H1 (cell line): ENCODE measurements at regions of chr16 and their contacts with region 1.

Region 1: DNA sequence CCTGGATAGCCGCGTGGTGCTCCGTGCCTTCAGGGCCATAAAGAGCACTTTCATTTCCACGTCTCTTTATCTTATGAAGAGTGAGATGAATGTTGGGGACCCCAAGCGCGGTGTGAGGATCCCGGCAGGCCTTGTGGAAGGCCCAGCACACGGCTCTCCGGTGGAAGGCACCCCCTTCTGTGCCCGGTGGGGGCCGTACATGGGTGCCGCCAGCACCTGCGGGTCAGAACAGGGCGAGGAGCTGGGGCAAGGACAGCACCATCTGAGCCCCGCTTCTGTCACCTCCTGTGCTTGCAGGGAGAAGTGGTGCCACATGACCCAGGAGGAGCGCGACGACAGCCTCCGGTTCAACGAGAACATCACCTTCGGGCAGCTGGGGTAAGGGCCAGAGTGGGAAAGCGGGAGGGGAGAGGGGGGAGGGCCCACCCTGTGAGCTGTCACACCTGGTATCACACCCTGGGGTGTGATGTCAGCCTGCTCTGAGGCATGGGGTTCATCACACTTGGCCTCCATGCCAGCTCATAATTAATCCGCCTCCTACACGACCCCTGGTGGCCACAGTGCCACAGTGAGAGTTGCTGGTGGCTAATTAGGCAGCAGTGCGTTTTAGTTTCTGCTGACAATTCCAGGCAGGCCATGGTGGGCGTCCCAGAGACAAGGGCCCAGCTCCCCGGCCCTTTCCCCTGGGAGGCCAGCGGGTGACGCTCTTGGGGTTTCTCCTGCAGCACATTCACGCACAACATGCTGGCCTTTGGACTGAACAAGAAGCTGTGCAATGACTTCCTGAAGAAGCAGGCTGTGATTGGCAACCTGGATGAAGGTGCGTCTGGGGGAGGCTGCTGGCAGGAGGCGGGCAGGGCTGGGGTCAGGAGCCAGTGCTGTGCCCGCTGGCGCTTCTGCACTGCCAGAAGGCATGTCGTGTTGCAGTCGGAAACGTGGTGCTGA is 25.7 kb downstream of the CIBAR2 start:
- DNase-seq: peak; percentile 44 to 89
- H3K4me3 ChIP-seq: no peak overlapping the region
- H3K27ac ChIP-seq: no peak overlapping the region
- H3K4me1 ChIP-seq: peaks cover 11 to 21% (median 19%) of the 10 kb centered on the region in 4 experiments
- H3K27me3 ChIP-seq: peaks cover 8 to 39% (median 32%) of the 10 kb centered on the region in 4 experiments
- CTCF ChIP-seq: peak; percentile 89 to 94 (median 93)
- EP300 ChIP-seq: no peak
- POLR2A ChIP-seq: no peak
- RAD21 ChIP-seq: peak; percentile 68 to 83

Region 2: GRCh38 chr16:85004559-85005205 is 81.9 kb before region 1 on chr16:
- CTCF ChIA-PET with region 1: interaction called, 13 read pairs
- POLR2A ChIA-PET with region 1: no interaction called
- DNase-seq: no peak
- H3K4me3 ChIP-seq: no peak overlapping the region
- H3K27ac ChIP-seq: no peak overlapping the region
- H3K4me1 ChIP-seq: peaks cover 0 to 17% (median 5%) of the 10 kb centered on the region in 4 experiments; a peak in 6 of 7 replicates
- H3K27me3 ChIP-seq: no peaks in the 10 kb centered on the region
- CTCF ChIP-seq: no peak
- EP300 ChIP-seq: no peak
- POLR2A ChIP-seq: no peak
- RAD21 ChIP-seq: no peak

Region 3: DNA sequence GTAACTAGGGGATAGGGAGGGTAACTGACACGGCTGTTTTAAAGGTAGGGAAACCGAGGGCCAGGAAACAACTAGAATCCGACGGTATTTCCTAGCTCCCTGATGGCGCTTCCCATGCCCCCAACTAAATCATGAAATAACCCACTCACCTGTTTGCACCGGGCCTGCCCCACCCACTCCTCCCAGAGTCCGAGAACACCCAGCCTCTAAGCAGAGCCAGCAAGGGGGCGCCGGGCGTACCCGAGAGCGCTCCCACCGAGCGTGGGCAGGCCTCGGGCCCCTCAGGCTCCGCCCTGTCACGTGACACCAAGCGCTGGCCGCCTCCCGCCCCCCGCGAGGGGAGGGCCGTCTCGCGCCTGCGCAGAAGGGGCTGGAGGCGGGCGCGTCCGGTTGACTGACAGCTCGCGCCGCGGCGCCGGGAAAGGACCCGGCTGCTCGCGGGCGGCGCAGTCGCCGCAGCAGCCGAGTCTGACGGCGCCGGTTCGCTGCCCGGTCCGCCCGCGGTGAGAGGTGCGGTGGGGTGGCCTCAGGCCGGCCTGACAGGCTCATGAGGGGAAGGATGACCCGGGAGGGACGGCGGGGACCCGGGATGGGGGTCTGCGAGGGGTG is 59.2 kb before region 1 on chr16 and contains the start of gene KIAA0513:
- CTCF ChIA-PET with region 1: interaction called, 26 read pairs
- POLR2A ChIA-PET with region 1: no interaction called
- DNase-seq: peak; percentile 73 to 97
- H3K4me3 ChIP-seq: peak within 1 kb of the TSS; percentile 70 to 92 (median 79)
- H3K27ac ChIP-seq: no peak within 1 kb of the TSS
- H3K4me1 ChIP-seq: peaks cover 3 to 7% (median 3%) of the 10 kb centered on the region in 4 experiments; a peak in 5 of 7 replicates
- H3K27me3 ChIP-seq: peaks cover 0 to 14% (median 7%) of the 10 kb centered on the region in 4 experiments; a peak in 4 of 7 replicates
- CTCF ChIP-seq: peak in 1 of 3 experiments; percentile 3; a peak in 1 of 4 replicates
- EP300 ChIP-seq: no peak
- POLR2A ChIP-seq: no peak; a peak in 1 of 3 replicates
- RAD21 ChIP-seq: no peak
- total RNA-seq, gene KIAA0513: 5.8 and 6.1 TPM in 2 replicates

Region 4: GRCh38 chr16:85072947-85073346 is 13.7 kb before region 1 on chr16:
- CTCF ChIA-PET with region 1: interaction called, 18 read pairs
- POLR2A ChIA-PET with region 1: interaction called, 5 read pairs
- DNase-seq: no peak
- H3K4me3 ChIP-seq: no peak overlapping the region
- H3K27ac ChIP-seq: no peak overlapping the region
- H3K4me1 ChIP-seq: peaks cover 0 to 13% (median 4%) of the 10 kb centered on the region in 4 experiments; a peak in 5 of 7 replicates
- H3K27me3 ChIP-seq: peaks cover 0 to 11% (median 7%) of the 10 kb centered on the region in 4 experiments; a peak in 4 of 7 replicates
- CTCF ChIP-seq: no peak
- EP300 ChIP-seq: no peak
- POLR2A ChIP-seq: no peak
- RAD21 ChIP-seq: no peak

Region 5: DNA sequence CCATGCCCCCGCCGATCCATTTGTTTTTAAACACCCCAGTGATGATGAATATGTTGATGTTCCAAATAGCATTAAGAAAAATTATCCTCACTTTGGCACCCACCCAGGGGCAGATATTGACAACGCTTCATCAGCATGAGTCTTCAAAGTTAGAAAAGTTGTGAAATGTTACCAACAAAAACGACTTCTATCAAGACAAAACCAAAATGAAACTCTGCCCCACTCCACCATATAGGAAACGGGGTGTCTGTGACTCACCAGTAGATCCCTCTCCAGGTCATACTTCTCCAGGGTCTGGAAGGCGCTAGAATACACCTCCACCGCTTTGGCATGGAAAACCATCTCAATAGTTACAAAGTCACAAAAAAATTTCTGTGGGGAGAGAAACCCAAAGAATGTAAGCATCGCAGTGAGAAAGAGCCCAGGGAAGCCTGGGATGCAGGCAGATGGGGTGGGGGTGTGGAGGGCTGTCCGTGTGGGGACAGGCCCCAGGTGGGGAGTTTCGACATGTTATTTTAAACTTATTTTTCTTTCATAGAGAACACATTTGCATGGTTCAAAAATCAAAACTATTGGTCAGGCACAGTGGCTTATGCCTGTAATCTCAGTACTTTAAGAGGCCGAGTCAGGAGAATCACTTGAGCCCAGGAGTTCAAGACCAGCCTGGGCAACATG is 15.5 kb after region 1 on chr16:
- CTCF ChIA-PET with region 1: interaction called, 18 read pairs
- POLR2A ChIA-PET with region 1: no interaction called
- DNase-seq: no peak
- H3K4me3 ChIP-seq: no peak overlapping the region
- H3K27ac ChIP-seq: no peak overlapping the region
- H3K4me1 ChIP-seq: no peaks in the 10 kb centered on the region
- H3K27me3 ChIP-seq: no peaks in the 10 kb centered on the region
- CTCF ChIP-seq: no peak
- EP300 ChIP-seq: no peak
- POLR2A ChIP-seq: no peak
- RAD21 ChIP-seq: no peak

Region 6: DNA sequence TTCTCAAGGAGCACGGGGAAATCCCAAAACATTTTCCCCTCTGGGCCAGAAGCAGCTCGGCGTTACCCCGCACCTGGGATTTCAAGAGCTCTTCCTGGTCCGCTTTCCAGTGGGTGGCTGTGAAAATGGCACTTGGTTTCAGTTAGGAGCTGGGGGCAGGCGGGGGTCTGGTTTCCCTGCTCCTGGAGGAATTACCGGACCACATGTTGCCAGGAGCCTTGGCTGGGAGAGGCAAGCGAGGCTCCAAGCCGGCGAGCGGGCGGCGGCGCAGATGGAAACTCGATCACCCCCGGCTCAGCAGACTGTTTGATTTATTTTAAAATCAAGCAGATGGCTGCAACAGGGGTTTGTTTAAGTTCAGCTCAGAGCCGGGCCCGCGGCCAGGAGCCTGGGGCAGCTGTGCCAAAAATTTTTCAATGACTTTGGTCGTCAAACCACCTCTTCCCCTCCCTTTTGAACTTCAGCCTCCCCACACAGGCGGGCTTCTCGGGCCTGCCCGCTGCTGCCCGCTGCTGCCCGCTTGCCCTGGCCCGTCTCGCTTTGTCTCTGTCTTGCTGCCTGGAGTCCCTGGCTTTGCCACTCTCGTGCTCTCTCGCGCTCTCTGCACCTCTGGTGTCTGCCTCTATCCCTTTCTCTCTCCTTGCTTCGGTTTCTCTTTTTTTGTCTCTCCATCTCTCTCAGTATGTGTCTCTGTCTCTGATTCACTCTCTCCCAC is 133.7 kb after region 1 on chr16:
- CTCF ChIA-PET with region 1: no interaction called
- POLR2A ChIA-PET with region 1: no interaction called
- DNase-seq: no peak
- H3K4me3 ChIP-seq: no peak overlapping the region
- H3K27ac ChIP-seq: no peak overlapping the region
- H3K4me1 ChIP-seq: peaks cover 7 to 34% (median 18%) of the 10 kb centered on the region in 4 experiments
- H3K27me3 ChIP-seq: no peaks in the 10 kb centered on the region
- CTCF ChIP-seq: no peak
- EP300 ChIP-seq: no peak
- POLR2A ChIP-seq: no peak
- RAD21 ChIP-seq: no peak